ENCODE measurements at regions of chr12 and their contacts with region 1.

Region 1: GRCh38 chr12:104930388-104931326 is 27.4 kb downstream of the SLC41A2 start:
- DNase-seq: no peak
- H3K4me3 Mint-ChIP-seq: no peak overlapping the region
- H3K27ac Mint-ChIP-seq: peak overlapping the region; percentile 82
- H3K4me1 Mint-ChIP-seq: peaks cover 33% of the 10 kb centered on the region
- H3K27me3 Mint-ChIP-seq: no peaks in the 10 kb centered on the region

Region 2: DNA sequence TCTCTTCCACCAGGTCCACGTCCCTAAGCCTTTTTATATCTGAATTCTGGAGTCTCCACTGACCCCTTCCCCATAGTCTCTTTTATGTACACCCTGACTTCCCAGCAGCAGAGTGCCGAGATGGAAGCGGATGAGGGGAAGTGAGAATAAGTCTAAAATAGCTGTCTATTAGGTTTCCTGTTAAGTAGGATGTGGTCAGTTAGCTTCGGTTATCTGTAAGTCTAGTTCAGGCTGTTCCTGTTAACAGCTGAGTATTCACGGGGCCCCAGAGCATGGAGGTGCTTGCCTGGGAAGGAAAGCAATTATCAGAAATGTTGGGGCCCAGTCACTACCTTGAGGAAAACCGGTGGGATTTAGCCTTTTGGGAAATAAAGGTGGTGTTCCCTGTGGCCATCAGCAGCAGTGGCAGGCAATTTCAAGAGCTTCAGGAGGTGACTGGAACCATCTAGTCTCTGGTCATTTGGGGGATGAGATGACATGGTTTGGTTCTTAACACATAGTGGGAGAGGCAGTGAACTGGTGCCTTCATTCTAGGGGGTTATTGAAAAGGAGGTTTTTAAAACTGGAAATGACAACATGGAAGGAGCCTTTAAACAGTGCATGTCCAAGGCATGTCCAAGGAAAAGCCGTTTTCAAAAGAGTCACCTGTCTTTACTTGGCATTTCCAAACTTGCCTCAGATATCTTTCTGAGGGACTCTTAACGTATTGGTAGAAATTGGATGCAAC is 452.1 kb before region 1 on chr12:
- intact Hi-C with region 1: loop called (anchors 10 kb)
- DNase-seq: no peak
- H3K4me3 Mint-ChIP-seq: peak overlapping the region; percentile 83
- H3K27ac Mint-ChIP-seq: peak overlapping the region; percentile 96
- H3K4me1 Mint-ChIP-seq: peaks cover 80% of the 10 kb centered on the region
- H3K27me3 Mint-ChIP-seq: no peaks in the 10 kb centered on the region

Region 3: GRCh38 chr12:104846056-104846767 is 84.4 kb before region 1 on chr12:
- intact Hi-C with region 1: no loop called
- DNase-seq: no peak
- H3K4me3 Mint-ChIP-seq: no peak overlapping the region
- H3K27ac Mint-ChIP-seq: no peak overlapping the region
- H3K4me1 Mint-ChIP-seq: peaks cover 10% of the 10 kb centered on the region
- H3K27me3 Mint-ChIP-seq: peaks cover 28% of the 10 kb centered on the region

Region 4: GRCh38 chr12:104958009-104958945 is 27.6 kb after region 1 on chr12 and contains the start of gene SLC41A2:
- intact Hi-C with region 1: loop called (anchors 1 kb)
- DNase-seq: peak; percentile 65
- H3K4me3 Mint-ChIP-seq: peak within 1 kb of the TSS; percentile 87
- H3K27ac Mint-ChIP-seq: peak within 1 kb of the TSS; percentile 88
- H3K4me1 Mint-ChIP-seq: peaks cover 23% of the 10 kb centered on the region
- H3K27me3 Mint-ChIP-seq: peaks cover 46% of the 10 kb centered on the region
- total RNA-seq, gene SLC41A2: 4.3 and 8.2 TPM in 2 replicates

Region 5: DNA sequence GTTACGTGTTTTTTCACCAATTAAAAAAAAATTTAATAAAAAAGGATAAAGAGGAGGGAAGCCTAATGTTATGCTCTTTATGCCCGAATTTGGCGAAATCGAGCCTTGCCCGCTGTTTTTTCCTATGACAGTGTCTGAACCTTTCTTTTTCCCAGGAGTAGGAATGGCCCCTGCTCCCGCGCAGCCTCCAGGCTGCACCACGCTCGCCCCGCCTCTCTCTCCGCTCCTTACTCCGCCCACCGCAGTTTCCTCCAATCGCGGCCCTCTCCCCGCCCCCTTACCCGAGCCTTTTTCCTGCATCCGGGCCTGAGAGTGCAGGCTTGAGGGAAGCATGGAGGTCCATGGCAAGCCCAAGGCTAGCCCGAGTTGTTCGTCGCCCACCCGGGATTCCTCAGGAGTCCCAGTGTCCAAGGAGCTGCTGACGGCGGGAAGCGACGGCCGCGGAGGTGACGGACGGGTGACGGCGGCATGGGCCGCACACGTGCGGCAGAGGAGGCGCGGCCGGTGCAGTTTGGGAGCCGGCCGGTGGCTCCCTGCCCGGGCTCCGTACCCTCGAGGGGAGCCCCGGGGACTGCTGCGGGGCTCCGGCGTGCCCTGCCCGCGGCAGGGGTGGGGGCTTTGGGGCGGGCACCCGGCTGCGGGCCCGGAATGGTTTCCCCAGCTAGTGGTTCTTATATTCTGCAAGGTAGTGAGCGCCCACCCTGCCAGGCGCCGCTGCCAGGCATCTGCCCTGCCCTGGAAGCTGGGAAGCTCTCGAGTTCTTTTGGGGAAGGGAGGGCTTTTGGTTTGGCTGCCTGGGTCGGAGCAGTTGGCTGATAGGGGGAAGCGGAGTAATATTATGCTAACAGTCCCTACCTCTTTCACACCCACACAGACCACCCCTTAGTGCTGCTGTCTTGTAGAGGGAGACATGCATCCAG is 55.6 kb after region 1 on chr12 and contains the start of gene NOPCHAP1:
- intact Hi-C with region 1: loop called (anchors 1 kb)
- DNase-seq: peak; percentile 81
- H3K4me3 Mint-ChIP-seq: peak within 1 kb of the TSS; percentile 88
- H3K27ac Mint-ChIP-seq: peak within 1 kb of the TSS; percentile 69
- H3K4me1 Mint-ChIP-seq: peaks cover 35% of the 10 kb centered on the region
- H3K27me3 Mint-ChIP-seq: peaks cover 9% of the 10 kb centered on the region
- total RNA-seq, gene NOPCHAP1: 25.2 and 29.6 TPM in 2 replicates

Region 6: GRCh38 chr12:104998423-104999346 is 68.0 kb after region 1 on chr12:
- intact Hi-C with region 1: no loop called
- DNase-seq: no peak
- H3K4me3 Mint-ChIP-seq: no peak overlapping the region
- H3K27ac Mint-ChIP-seq: no peak overlapping the region
- H3K4me1 Mint-ChIP-seq: peaks cover 3% of the 10 kb centered on the region
- H3K27me3 Mint-ChIP-seq: no peaks in the 10 kb centered on the region

Region 7: GRCh38 chr12:105030820-105031807 is 100.5 kb after region 1 on chr12:
- intact Hi-C with region 1: loop called (anchors 5 kb)
- DNase-seq: no peak
- H3K4me3 Mint-ChIP-seq: no peak overlapping the region
- H3K27ac Mint-ChIP-seq: peak overlapping the region; percentile 13
- H3K4me1 Mint-ChIP-seq: peaks cover 30% of the 10 kb centered on the region
- H3K27me3 Mint-ChIP-seq: no peaks in the 10 kb centered on the region

Measured in activated T-helper 2 cell treated with anti-CD3 and anti-CD28 coated beads, Interferon-gamma antibody, Interleukin-2, Interleukin-4, amounts not matched to agents 10 μg/mL and 5 μg/mL and 100 μg/mL, durations not matched to agents 14 hours and 24 hours and 36 hours (primary cell).